ENCODE measurements at regions of chr13 and their contacts with region 1.

Region 1: GRCh38 chr13:111216166-111216960 is 101.3 kb downstream of the ARHGEF7 start:
- DNase-seq: peak; percentile 41 to 59 (median 58)
- H3K4me3 ChIP-seq: no peak overlapping the region
- H3K27ac ChIP-seq: no peak overlapping the region
- H3K4me1 ChIP-seq: peaks cover 0 to 15% (median 2%) of the 10 kb centered on the region in 4 experiments
- H3K27me3 ChIP-seq: no peaks in the 10 kb centered on the region

Region 2: DNA sequence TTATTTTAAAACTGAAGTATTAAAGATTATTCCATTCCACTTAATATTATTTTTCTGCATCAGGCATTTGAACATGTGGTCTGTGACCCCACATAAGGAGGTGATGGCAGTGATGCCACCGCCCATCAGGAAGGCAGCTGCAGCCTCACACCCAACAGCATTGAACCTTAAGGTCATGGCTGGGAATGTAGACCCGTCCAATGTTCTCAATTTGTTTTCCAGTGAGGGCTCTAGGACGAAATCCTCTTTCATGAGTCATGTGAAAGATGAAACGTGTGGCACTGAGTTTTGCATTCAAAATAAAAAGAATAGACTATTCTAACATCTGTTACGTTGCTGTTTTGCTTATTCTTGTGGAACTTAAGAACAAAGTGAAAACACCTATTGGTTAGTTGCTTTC is 227.0 kb before region 1 on chr13:
- CTCF ChIA-PET with region 1: no interaction called
- POLR2A ChIA-PET with region 1: no interaction called
- DNase-seq: no peak
- H3K4me3 ChIP-seq: no peak overlapping the region
- H3K27ac ChIP-seq: no peak overlapping the region
- H3K4me1 ChIP-seq: no peaks in the 10 kb centered on the region
- H3K27me3 ChIP-seq: peaks cover 0 to 22% (median 3%) of the 10 kb centered on the region in 5 experiments

Region 3: DNA sequence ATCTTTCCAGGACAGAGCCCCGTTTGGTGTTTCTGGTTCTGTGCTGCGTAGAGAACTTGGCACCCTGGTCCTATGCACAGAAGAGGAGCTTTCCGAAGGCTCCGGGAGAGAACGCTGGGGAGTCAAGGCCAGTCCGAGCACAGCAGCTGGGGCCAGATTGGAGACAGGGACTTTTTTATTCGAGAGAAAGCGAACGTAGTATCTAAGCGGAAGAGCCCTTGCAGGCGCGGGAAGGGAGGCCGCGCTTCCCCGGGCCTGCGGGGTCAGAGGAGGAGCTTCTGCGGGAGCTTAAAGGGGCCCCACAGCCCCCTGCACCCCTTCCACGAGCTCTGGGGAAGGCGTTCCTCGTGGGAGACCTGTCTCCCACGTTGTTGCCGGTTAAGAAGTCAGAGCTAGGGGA is 149.8 kb before region 1 on chr13:
- CTCF ChIA-PET with region 1: interaction called, 20 read pairs
- POLR2A ChIA-PET with region 1: no interaction called
- DNase-seq: peak in 2 of 3 donors; percentile 7 to 18
- H3K4me3 ChIP-seq: no peak overlapping the region
- H3K27ac ChIP-seq: no peak overlapping the region
- H3K4me1 ChIP-seq: peaks cover 0 to 7% (median 7%) of the 10 kb centered on the region in 4 experiments
- H3K27me3 ChIP-seq: peaks cover 3 to 56% (median 28%) of the 10 kb centered on the region in 5 experiments

Region 4: DNA sequence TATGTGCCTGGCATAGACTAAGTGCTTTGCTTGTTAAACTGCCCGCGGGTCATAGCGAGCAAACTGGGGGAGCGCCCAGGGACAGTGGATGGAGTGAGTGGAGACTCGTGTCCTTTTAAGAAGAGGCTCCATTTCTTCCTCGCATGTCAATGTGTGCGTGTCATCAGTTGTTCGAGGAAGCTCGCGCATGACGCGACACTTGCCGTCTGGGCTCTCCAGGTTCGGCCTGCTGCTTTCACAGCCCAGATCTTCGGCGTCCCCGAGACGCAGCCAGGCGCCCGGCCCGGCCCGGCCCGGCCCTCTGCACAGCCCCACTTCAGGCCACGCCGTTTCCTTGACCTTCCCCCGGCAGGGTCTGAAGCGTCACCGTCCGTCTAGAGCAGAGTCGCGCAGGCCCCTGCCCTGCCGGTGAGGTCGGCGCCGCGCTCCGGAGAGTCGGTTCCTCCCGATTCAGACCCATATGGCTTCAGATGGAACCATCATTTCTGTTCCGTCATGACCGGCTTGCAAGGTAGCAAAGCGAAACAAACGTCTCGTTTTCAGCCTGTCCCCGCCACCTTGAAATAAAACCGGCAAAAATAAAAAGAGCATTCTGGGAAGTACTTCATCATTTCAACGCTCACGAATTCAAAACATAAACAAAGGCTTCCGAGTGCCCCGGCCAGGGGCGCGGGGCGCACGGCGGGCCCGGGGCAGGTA is 101.9 kb before region 1 on chr13:
- CTCF ChIA-PET with region 1: no interaction called
- POLR2A ChIA-PET with region 1: no interaction called
- DNase-seq: peak; percentile 38 to 83 (median 78)
- H3K4me3 ChIP-seq: peak overlapping the region; percentile 35 to 77 (median 62)
- H3K27ac ChIP-seq: no peak overlapping the region
- H3K4me1 ChIP-seq: peaks cover 0 to 16% (median 12%) of the 10 kb centered on the region in 4 experiments
- H3K27me3 ChIP-seq: peaks cover 19 to 94% (median 49%) of the 10 kb centered on the region in 5 experiments

Region 5: DNA sequence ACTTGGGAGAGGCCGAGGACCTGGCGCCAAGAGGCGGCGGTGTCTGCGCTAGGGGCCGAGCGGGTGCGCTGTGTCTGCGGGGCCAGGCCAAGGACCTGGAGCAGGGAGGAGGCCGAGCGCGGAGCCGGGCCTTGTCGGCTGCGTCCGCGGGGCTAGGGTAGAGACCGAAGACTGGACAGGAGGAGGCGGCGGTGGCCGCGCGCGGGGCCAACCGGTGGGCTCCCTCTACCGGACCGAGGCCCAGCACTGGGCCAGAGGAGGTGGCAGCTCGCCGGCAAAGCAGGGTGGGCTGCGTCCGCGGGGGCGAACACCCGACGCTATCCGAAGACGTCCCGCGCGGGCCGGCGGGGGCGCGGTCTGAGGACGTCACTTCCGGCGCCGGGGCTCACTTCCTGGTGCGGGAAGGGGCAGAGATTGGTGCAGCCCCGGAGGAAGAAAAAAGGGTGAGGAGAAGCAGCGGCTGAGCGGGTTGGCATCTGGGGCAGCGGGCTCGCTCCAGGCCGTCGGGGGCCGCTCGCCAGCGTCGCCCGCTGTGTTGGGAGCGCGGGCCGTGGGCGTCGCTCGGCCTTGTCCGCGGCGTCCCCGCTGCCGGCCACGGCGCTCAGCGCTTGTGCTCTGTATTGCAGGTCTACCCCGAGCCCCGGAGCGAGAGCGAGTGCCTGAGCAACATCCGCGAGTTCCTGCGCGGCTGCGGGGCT is 62.9 kb before region 1 on chr13:
- CTCF ChIA-PET with region 1: interaction called, 10 read pairs
- POLR2A ChIA-PET with region 1: no interaction called
- DNase-seq: peak; percentile 94 to 97 (median 95)
- H3K4me3 ChIP-seq: peak overlapping the region; percentile 74 to 98 (median 87)
- H3K27ac ChIP-seq: peak overlapping the region; percentile 85 to 94
- H3K4me1 ChIP-seq: peaks cover 4 to 20% (median 17%) of the 10 kb centered on the region in 4 experiments
- H3K27me3 ChIP-seq: peaks cover 1 to 11% (median 2%) of the 10 kb centered on the region in 5 experiments

Region 6: GRCh38 chr13:111202745-111203144 is 13.6 kb before region 1 on chr13:
- CTCF ChIA-PET with region 1: interaction called, 12 read pairs
- POLR2A ChIA-PET with region 1: interaction called, 3 read pairs
- DNase-seq: peak in 2 of 3 donors; percentile 62 to 65
- H3K4me3 ChIP-seq: peak overlapping the region in 1 of 7 experiments; percentile 7
- H3K27ac ChIP-seq: no peak overlapping the region
- H3K4me1 ChIP-seq: peaks cover 35 to 42% (median 39%) of the 10 kb centered on the region in 4 experiments
- H3K27me3 ChIP-seq: no peaks in the 10 kb centered on the region

Region 7: DNA sequence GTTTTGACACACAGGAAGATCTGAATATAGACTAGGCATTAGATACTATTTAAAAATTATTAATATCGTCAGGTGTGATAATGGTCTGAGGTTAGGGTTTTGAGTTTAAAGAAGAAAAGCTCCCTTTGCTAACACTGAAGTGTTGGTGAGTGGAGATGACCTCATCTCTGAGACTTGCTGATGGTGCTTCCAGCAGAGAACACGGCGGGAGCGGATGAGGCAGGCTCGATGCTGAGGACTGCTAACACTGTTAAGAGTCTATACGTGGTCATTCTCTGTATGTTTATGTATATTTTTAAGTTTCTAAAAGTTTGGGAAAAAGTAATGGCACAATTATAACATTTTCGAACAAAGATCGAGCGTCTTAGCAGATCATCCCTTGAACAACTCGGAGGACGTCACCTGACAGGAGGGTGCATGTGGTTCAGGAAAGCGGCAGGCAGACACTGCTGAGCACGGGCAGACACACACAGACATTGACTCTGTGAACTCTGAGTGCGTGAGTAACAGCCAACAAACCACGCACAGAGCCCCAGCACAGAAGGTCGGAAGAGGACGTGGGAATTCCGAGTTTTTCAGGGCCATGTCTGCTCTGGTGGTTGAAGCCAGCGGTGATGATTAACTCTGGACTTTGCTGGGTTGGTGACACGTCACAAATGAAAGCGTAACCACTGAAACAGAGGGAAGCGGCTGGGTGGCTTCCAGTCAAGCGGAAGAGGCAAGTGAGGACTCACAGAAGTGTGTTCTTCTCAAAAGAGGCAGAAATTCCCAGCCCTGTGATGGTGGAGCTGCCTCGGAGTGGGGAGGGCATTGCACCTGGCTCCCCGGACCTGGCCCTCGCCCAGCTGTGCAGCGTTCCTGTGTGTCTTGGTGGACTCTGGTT is 12.1 kb after region 1 on chr13:
- CTCF ChIA-PET with region 1: interaction called, 12 read pairs
- POLR2A ChIA-PET with region 1: no interaction called
- DNase-seq: no peak
- H3K4me3 ChIP-seq: no peak overlapping the region
- H3K27ac ChIP-seq: no peak overlapping the region
- H3K4me1 ChIP-seq: no peaks in the 10 kb centered on the region
- H3K27me3 ChIP-seq: no peaks in the 10 kb centered on the region